ENCODE measurements at regions of chr18 and their contacts with region 1.

Region 1: GRCh38 chr18:9516437-9517064 is 41.2 kb downstream of the RALBP1 start:
- DNase-seq: peak; percentile 17
- ATAC-seq: peak; percentile 74
- H3K4me3 ChIP-seq: no peak overlapping the region
- H3K27ac ChIP-seq: no peak overlapping the region
- H3K4me1 ChIP-seq: no peaks in the 10 kb centered on the region
- H3K27me3 ChIP-seq: no peaks in the 10 kb centered on the region
- CTCF ChIP-seq: peak; percentile 76 to 88 (median 84)
- EP300 ChIP-seq: no peak
- POLR2A ChIP-seq: no peak
- RAD21 ChIP-seq: peak; percentile 95

Region 2: DNA sequence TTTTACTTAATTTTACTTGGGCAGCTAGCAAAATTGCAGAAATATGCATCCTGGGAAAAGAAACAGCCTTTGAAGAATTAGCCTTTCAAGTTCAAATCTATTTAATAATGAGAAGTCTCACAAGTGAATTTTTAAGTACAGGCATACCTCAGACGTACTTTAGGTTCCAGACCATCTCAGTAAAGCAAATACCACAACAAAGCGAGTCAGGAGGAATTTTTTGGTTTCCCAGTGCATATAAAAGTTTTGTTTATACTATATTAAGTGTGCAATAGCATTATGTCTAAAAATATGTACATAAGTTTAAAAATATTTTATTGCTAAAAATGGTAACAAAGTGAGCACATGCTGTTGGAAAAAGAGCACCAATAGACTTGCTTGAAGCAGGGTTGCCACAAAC is 232.8 kb before region 1 on chr18:
- CTCF ChIA-PET with region 1: interaction called, 5 read pairs
- POLR2A ChIA-PET with region 1: no interaction called
- RAD21 ChIA-PET with region 1: no interaction called
- SMC1A ChIA-PET with region 1: interaction called, 3 read pairs
- in situ Hi-C with region 1: no loop called
- intact Hi-C with region 1: loop called (anchors 5 kb)
- DNase-seq: no peak
- ATAC-seq: no peak
- H3K4me3 ChIP-seq: no peak overlapping the region
- H3K27ac ChIP-seq: no peak overlapping the region
- H3K4me1 ChIP-seq: no peaks in the 10 kb centered on the region
- H3K27me3 ChIP-seq: no peaks in the 10 kb centered on the region
- CTCF ChIP-seq: no peak
- EP300 ChIP-seq: no peak
- POLR2A ChIP-seq: no peak
- RAD21 ChIP-seq: no peak

Region 3: GRCh38 chr18:9334329-9334972 is 182.1 kb before region 1 on chr18 and contains the start of gene TWSG1:
- CTCF ChIA-PET with region 1: interaction called, 3 read pairs
- POLR2A ChIA-PET with region 1: no interaction called
- RAD21 ChIA-PET with region 1: interaction called, 3 read pairs
- SMC1A ChIA-PET with region 1: interaction called, 3 read pairs
- in situ Hi-C with region 1: no loop called
- intact Hi-C with region 1: loop called (anchors 2 kb)
- DNase-seq: peak; percentile 62
- ATAC-seq: peak; percentile 95
- H3K4me3 ChIP-seq: peak within 1 kb of the TSS; percentile 89
- H3K27ac ChIP-seq: peak within 1 kb of the TSS; percentile 36
- H3K4me1 ChIP-seq: peaks cover 5% of the 10 kb centered on the region; the same call in 1 of the 2 replicates
- H3K27me3 ChIP-seq: no peaks in the 10 kb centered on the region
- CTCF ChIP-seq: peak in 2 of 3 experiments; percentile 49 to 64; a peak in 3 of 6 replicates
- EP300 ChIP-seq: no peak
- POLR2A ChIP-seq: peak; percentile 78
- RAD21 ChIP-seq: peak; percentile 46
- polyA plus RNA-seq, gene TWSG1: 11.1 to 11.4 TPM

Region 4: GRCh38 chr18:9437021-9437437 is 79.5 kb before region 1 on chr18:
- CTCF ChIA-PET with region 1: no interaction called
- POLR2A ChIA-PET with region 1: no interaction called
- RAD21 ChIA-PET with region 1: no interaction called
- SMC1A ChIA-PET with region 1: no interaction called
- in situ Hi-C with region 1: no loop called
- intact Hi-C with region 1: loop called (anchors 5 kb)
- DNase-seq: no peak
- ATAC-seq: no peak
- H3K4me3 ChIP-seq: no peak overlapping the region
- H3K27ac ChIP-seq: no peak overlapping the region
- H3K4me1 ChIP-seq: peaks cover 10% of the 10 kb centered on the region
- H3K27me3 ChIP-seq: no peaks in the 10 kb centered on the region
- CTCF ChIP-seq: no peak
- EP300 ChIP-seq: no peak
- POLR2A ChIP-seq: no peak
- RAD21 ChIP-seq: no peak

Region 5: GRCh38 chr18:9506046-9506792 is 10.3 kb before region 1 on chr18:
- CTCF ChIA-PET with region 1: interaction called, 31 read pairs
- POLR2A ChIA-PET with region 1: no interaction called
- RAD21 ChIA-PET with region 1: interaction called, 7 read pairs
- SMC1A ChIA-PET with region 1: interaction called, 5 read pairs
- in situ Hi-C with region 1: no loop called
- intact Hi-C with region 1: no loop called
- DNase-seq: no peak
- ATAC-seq: peak; percentile 64
- H3K4me3 ChIP-seq: no peak overlapping the region
- H3K27ac ChIP-seq: no peak overlapping the region
- H3K4me1 ChIP-seq: no peaks in the 10 kb centered on the region
- H3K27me3 ChIP-seq: no peaks in the 10 kb centered on the region
- CTCF ChIP-seq: no peak
- EP300 ChIP-seq: no peak
- POLR2A ChIP-seq: no peak
- RAD21 ChIP-seq: no peak

Region 6: DNA sequence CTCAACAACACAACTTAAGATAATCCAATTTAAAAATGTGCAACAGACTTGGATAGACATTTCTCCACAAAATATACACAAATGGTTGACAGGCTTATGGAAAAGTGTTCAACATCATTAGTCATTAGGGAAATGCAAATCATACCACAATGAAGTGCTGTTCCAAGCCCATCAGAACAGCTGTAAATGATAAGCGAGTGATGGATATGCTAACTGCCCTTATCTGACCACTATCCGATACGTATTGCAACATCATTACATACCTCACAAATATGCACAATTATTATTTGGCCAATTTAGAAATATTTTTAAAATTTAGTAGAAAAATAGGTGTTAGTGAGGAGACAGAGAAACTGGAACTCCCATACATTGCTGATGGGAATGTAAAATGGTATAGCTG is 35.6 kb after region 1 on chr18:
- CTCF ChIA-PET with region 1: no interaction called
- POLR2A ChIA-PET with region 1: no interaction called
- RAD21 ChIA-PET with region 1: no interaction called
- SMC1A ChIA-PET with region 1: no interaction called
- in situ Hi-C with region 1: no loop called
- intact Hi-C with region 1: no loop called
- DNase-seq: no peak
- ATAC-seq: no peak
- H3K4me3 ChIP-seq: no peak overlapping the region
- H3K27ac ChIP-seq: no peak overlapping the region
- H3K4me1 ChIP-seq: no peaks in the 10 kb centered on the region
- H3K27me3 ChIP-seq: no peaks in the 10 kb centered on the region
- CTCF ChIP-seq: no peak
- EP300 ChIP-seq: no peak
- POLR2A ChIP-seq: no peak
- RAD21 ChIP-seq: no peak